A549 (cell line): ENCODE measurements at regions of chr19 and their contacts with region 1.

Region 1: DNA sequence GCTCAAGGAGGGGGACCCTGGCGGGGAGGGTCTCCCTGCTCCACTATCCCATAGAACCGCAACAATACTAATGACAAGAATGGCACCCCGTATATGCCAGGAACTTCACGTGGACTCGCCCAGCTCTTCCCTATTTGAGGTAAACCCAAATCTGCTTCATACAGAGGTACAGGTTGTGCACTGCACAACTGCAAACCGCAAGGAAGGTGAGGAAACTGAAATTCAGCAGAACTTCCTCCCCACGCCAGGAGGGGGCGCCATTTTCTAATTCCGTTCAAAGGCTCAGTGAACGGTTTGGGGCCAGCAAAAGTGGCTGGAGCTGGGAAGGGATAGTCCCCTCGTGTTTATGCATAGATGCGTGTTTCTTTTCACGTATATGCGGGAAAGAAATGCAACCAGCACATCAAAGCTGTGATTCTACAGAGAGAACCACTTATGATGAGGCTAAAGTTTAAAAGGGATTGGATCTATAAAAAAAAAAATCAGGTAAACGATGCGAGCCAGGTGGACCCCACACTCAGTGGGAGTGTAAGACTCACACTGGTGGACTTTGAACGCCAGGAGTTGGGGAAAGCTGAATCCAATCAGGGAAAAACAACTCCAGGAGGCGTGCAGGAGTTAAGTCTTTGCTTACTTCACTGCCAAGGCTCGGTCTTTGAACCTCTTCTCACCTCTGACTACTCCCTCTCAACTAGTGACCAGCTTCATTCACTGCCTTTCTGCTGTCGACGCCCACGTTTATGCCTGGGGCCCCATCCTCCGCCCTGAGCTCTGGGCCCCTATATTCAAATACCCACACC is 20.3 kb downstream of the C19orf81 start:
- DNase-seq: peak; percentile 61 to 69
- ATAC-seq: peak; percentile 48 to 63; a peak in 5 of 6 replicates
- H3K4me3 ChIP-seq: no peak overlapping the region; the same call in 2 of the 3 replicates
- H3K27ac ChIP-seq: no peak overlapping the region
- H3K4me1 ChIP-seq: peaks cover 23% of the 10 kb centered on the region
- CTCF ChIP-seq: peak; percentile 91
- EP300 ChIP-seq: no peak
- POLR2A ChIP-seq: no peak
- RAD21 ChIP-seq: peak; percentile 53 to 65

Region 2: GRCh38 chr19:50607874-50608785 is 61.4 kb before region 1 on chr19:
- CTCF ChIA-PET with region 1: interaction called, 16 read pairs
- POLR2A ChIA-PET with region 1: no interaction called
- DNase-seq: peak; percentile 97 to 99
- ATAC-seq: peak; percentile 86 to 90
- H3K4me3 ChIP-seq: peak overlapping the region; percentile 28
- H3K27ac ChIP-seq: peak overlapping the region in 1 of 2 experiments; percentile 37; a peak in 3 of 6 replicates
- H3K4me1 ChIP-seq: peaks cover 5% of the 10 kb centered on the region; the same call in 1 of the 3 replicates
- CTCF ChIP-seq: peak; percentile 82
- EP300 ChIP-seq: no peak
- POLR2A ChIP-seq: no peak
- RAD21 ChIP-seq: peak; percentile 80 to 82

Region 3: GRCh38 chr19:50686310-50687032 is 17.0 kb after region 1 on chr19:
- CTCF ChIA-PET with region 1: interaction called, 31 read pairs
- POLR2A ChIA-PET with region 1: no interaction called
- DNase-seq: no peak
- ATAC-seq: peak in 1 of 2 experiments; percentile 14; a peak in 1 of 6 replicates
- H3K4me3 ChIP-seq: 0 out of 3 replicates have a peak overlapping the region, but pooled peaks have one; percentile 12
- H3K27ac ChIP-seq: no peak overlapping the region
- H3K4me1 ChIP-seq: peaks cover 4% of the 10 kb centered on the region; the same call in 2 of the 3 replicates
- CTCF ChIP-seq: no peak
- EP300 ChIP-seq: no peak
- POLR2A ChIP-seq: no peak
- RAD21 ChIP-seq: no peak

Region 4: DNA sequence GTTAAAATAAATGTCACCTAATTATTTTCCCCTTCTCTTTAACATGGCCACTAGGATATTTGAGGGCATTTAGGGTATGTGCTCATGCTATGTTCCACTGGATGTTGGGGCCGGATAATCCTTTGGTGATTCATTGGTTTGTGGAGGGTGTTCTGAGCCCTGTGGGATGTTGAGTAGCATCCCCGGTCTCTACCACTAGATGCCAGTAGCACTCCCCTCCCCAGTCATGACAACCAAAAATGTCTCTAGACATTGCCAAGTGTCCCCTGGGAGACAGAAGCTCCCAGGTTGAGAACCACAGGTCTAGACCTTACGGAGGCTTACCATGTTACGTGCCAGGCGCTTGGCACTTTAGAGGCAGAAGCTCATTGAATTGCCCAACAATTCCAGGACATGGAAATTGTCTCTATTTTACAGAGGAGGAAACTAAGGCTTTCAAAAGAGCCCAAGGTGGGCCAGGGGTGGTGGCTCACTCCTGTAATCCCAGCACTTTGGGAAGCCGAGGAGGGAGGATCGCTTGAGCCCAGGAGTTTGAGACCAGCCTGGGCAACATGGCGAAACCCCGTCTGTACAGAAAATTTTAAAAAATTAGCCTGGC is 36.0 kb after region 1 on chr19:
- CTCF ChIA-PET with region 1: interaction called, 36 read pairs
- POLR2A ChIA-PET with region 1: no interaction called
- DNase-seq: peak; percentile 79 to 95
- ATAC-seq: peak; percentile 84 to 88
- H3K4me3 ChIP-seq: no peak overlapping the region
- H3K27ac ChIP-seq: no peak overlapping the region
- H3K4me1 ChIP-seq: peaks cover 13% of the 10 kb centered on the region; the same call in 1 of the 3 replicates
- CTCF ChIP-seq: peak; percentile 80
- EP300 ChIP-seq: no peak
- POLR2A ChIP-seq: no peak
- RAD21 ChIP-seq: peak; percentile 73 to 76

Region 5: GRCh38 chr19:50777754-50778303 is 108.3 kb after region 1 on chr19:
- CTCF ChIA-PET with region 1: interaction called, 98 read pairs
- POLR2A ChIA-PET with region 1: no interaction called
- DNase-seq: peak in 1 of 2 experiments; percentile 71
- ATAC-seq: peak; percentile 36 to 62; a peak in 5 of 6 replicates
- H3K4me3 ChIP-seq: peak overlapping the region; percentile 29; the same call in 2 of the 3 replicates
- H3K27ac ChIP-seq: no peak overlapping the region
- H3K4me1 ChIP-seq: peaks cover 14% of the 10 kb centered on the region; the same call in 1 of the 3 replicates
- CTCF ChIP-seq: no peak
- EP300 ChIP-seq: no peak
- POLR2A ChIP-seq: no peak
- RAD21 ChIP-seq: no peak

Region 6: GRCh38 chr19:50851620-50852019 is 182.1 kb after region 1 on chr19:
- CTCF ChIA-PET with region 1: no interaction called
- POLR2A ChIA-PET with region 1: no interaction called
- DNase-seq: no peak
- ATAC-seq: no peak
- H3K4me3 ChIP-seq: no peak overlapping the region
- H3K27ac ChIP-seq: no peak overlapping the region
- H3K4me1 ChIP-seq: no peaks in the 10 kb centered on the region
- CTCF ChIP-seq: no peak
- EP300 ChIP-seq: no peak
- POLR2A ChIP-seq: no peak
- RAD21 ChIP-seq: no peak